ENCODE measurements at regions of chr10 and their contacts with region 1.

Region 1: GRCh38 chr10:75235375-75236177 is at the start of gene COMTD1:
- DNase-seq: peak; percentile 99
- H3K4me3 Mint-ChIP-seq: peak within 1 kb of the TSS; percentile 76
- H3K27ac Mint-ChIP-seq: peak within 1 kb of the TSS; percentile 17
- H3K4me1 Mint-ChIP-seq: peaks cover 22% of the 10 kb centered on the region
- H3K27me3 Mint-ChIP-seq: no peaks in the 10 kb centered on the region
- CTCF ChIP-seq: peak; percentile 100
- total RNA-seq, gene COMTD1: 52.4 and 67.6 TPM in 2 replicates

Region 2: DNA sequence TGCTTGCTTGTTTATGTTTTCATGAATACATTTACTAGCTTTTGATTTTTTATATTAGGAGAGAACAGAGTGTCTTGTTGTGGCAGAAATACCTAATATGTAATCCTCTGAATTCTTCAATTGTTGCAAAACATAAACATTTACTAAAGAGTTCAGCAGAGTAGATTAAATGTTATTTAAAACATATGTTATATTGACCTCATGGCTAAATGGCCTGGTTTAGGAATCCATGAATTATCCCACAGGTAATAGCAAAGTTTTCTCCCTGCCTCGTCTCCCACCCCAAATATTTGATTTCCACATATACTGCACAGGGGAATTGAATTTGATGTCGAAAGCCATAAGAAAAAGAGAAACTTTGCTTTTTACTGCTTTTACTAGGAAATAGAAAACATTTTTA is 972.7 kb before region 1 on chr10:
- CTCF ChIA-PET with region 1: no interaction called
- intact Hi-C with region 1: loop called (anchors 10 kb)
- DNase-seq: no peak
- H3K4me3 Mint-ChIP-seq: no peak overlapping the region
- H3K27ac Mint-ChIP-seq: no peak overlapping the region
- H3K4me1 Mint-ChIP-seq: peaks cover 6% of the 10 kb centered on the region
- H3K27me3 Mint-ChIP-seq: no peaks in the 10 kb centered on the region
- CTCF ChIP-seq: no peak

Region 3: GRCh38 chr10:75111907-75112679 is 123.5 kb before region 1 on chr10:
- CTCF ChIA-PET with region 1: interaction called, 3 read pairs
- intact Hi-C with region 1: loop called (anchors 2 kb)
- DNase-seq: peak; percentile 61
- H3K4me3 Mint-ChIP-seq: peak overlapping the region; percentile 84
- H3K27ac Mint-ChIP-seq: peak overlapping the region; percentile 88
- H3K4me1 Mint-ChIP-seq: peaks cover 30% of the 10 kb centered on the region
- H3K27me3 Mint-ChIP-seq: no peaks in the 10 kb centered on the region
- CTCF ChIP-seq: no peak

Region 4: GRCh38 chr10:75127471-75127870 is 108.1 kb before region 1 on chr10:
- CTCF ChIA-PET with region 1: no interaction called
- intact Hi-C with region 1: no loop called
- DNase-seq: no peak
- H3K4me3 Mint-ChIP-seq: no peak overlapping the region
- H3K27ac Mint-ChIP-seq: no peak overlapping the region
- H3K4me1 Mint-ChIP-seq: no peaks in the 10 kb centered on the region
- H3K27me3 Mint-ChIP-seq: no peaks in the 10 kb centered on the region
- CTCF ChIP-seq: no peak

Region 5: DNA sequence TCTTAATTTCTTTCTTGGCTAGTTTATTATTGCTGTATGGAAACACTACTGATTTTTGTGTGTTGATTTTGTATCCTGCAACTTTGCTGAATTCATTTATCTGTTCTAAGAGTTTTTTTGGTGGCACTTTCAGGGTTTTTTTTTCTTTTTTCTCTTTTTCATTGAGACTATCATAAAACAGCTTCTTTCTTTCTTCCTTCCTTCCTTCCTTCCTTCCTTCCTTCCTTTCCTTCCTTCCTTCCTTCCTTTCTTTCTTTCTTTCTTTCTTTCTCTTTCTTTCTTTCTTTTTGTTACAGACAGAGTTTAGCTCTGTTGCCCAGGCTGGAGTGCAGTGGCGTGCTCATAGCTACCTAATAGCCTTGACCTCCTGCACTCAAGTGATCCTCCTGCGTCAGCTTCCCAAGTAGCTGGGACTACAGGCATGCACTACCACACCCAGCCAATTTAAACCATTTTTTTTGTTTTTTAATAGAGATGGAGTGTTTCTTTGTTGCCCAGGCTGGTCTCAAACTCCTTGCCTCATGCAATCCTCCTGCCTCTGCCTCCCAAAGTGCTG is 93.7 kb after region 1 on chr10:
- CTCF ChIA-PET with region 1: no interaction called
- intact Hi-C with region 1: no loop called
- DNase-seq: no peak
- H3K4me3 Mint-ChIP-seq: no peak overlapping the region
- H3K27ac Mint-ChIP-seq: no peak overlapping the region
- H3K4me1 Mint-ChIP-seq: no peaks in the 10 kb centered on the region
- H3K27me3 Mint-ChIP-seq: peaks cover 13% of the 10 kb centered on the region
- CTCF ChIP-seq: no peak